ENCODE measurements at regions of chr2 and their contacts with region 1.

Region 1: GRCh38 chr2:69914170-69914960 is 544 bp upstream of the MXD1 start:
- DNase-seq: peak; percentile 98 to 100
- H3K4me3 ChIP-seq: peak overlapping the region; percentile 53 to 76 (median 70)
- H3K27ac ChIP-seq: peak overlapping the region; percentile 93
- H3K4me1 ChIP-seq: no peaks in the 10 kb centered on the region
- H3K27me3 ChIP-seq: no peaks in the 10 kb centered on the region
- CTCF ChIP-seq: peak in 2 of 3 experiments; percentile 24 to 31; a peak in 2 of 4 replicates
- EP300 ChIP-seq: no peak
- POLR2A ChIP-seq: peak; percentile 96 to 97
- RAD21 ChIP-seq: peak; percentile 22 to 49; a peak in 3 of 4 replicates

Region 2: GRCh38 chr2:69643602-69644505 is 270.5 kb before region 1 on chr2 and contains the start of gene AAK1:
- CTCF ChIA-PET with region 1: no interaction called
- POLR2A ChIA-PET with region 1: no interaction called
- DNase-seq: peak in 1 of 2 experiments; percentile 90
- H3K4me3 ChIP-seq: peak within 1 kb of the TSS; percentile 81 to 100 (median 97)
- H3K27ac ChIP-seq: peak within 1 kb of the TSS; percentile 73; the same call in 1 of the 2 replicates
- H3K4me1 ChIP-seq: peaks cover 4 to 17% (median 8%) of the 10 kb centered on the region in 4 experiments; a peak in 6 of 7 replicates
- H3K27me3 ChIP-seq: no peaks in the 10 kb centered on the region
- CTCF ChIP-seq: 0 out of 4 replicates have a peak, but pooled peaks of 1 of the 3 experiments have one; percentile 10
- EP300 ChIP-seq: peak in 1 of 2 experiments; percentile 38; a peak in 1 of 3 replicates
- POLR2A ChIP-seq: peak in 1 of 2 experiments; percentile 51; a peak in 2 of 3 replicates
- RAD21 ChIP-seq: no peak
- total RNA-seq, gene AAK1: 40.5 and 48.1 TPM in 2 replicates

Region 3: GRCh38 chr2:69807821-69808540 is 106.4 kb before region 1 on chr2:
- CTCF ChIA-PET with region 1: no interaction called
- POLR2A ChIA-PET with region 1: no interaction called
- DNase-seq: peak in 1 of 2 experiments; percentile 35
- H3K4me3 ChIP-seq: no peak overlapping the region
- H3K27ac ChIP-seq: no peak overlapping the region
- H3K4me1 ChIP-seq: no peaks in the 10 kb centered on the region
- H3K27me3 ChIP-seq: no peaks in the 10 kb centered on the region
- CTCF ChIP-seq: no peak
- EP300 ChIP-seq: no peak
- POLR2A ChIP-seq: no peak
- RAD21 ChIP-seq: no peak

Region 4: DNA sequence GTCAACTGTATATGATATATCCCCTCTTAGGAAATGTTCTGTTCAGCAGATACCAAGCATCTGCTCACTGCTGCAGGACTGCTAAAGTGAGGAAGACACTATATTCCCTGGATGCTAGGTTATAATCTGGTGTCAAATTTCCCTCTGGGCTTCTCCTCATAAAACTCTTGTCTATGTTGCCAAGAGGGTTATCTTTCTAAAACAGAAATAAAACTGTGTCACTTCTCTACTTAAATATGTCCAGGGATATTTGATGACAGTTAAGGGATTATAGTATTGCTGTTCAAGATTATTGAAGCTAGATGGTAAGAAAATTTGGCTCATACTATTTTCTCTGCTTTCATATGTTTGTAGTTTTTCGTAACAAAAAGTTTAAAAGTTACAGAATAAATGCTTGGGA is 51.1 kb before region 1 on chr2:
- CTCF ChIA-PET with region 1: no interaction called
- POLR2A ChIA-PET with region 1: no interaction called
- DNase-seq: no peak
- H3K4me3 ChIP-seq: no peak overlapping the region
- H3K27ac ChIP-seq: no peak overlapping the region
- H3K4me1 ChIP-seq: no peaks in the 10 kb centered on the region
- H3K27me3 ChIP-seq: no peaks in the 10 kb centered on the region
- CTCF ChIP-seq: no peak
- EP300 ChIP-seq: no peak
- POLR2A ChIP-seq: no peak
- RAD21 ChIP-seq: no peak

Region 5: GRCh38 chr2:69893684-69894551 is 20.4 kb before region 1 on chr2 and contains the start of gene SNRNP27:
- CTCF ChIA-PET with region 1: interaction called, 6 read pairs
- POLR2A ChIA-PET with region 1: interaction called, 21 read pairs
- DNase-seq: peak in 1 of 2 experiments; percentile 85
- H3K4me3 ChIP-seq: peak within 1 kb of the TSS; percentile 88 to 94 (median 91)
- H3K27ac ChIP-seq: peak within 1 kb of the TSS; percentile 72
- H3K4me1 ChIP-seq: no peaks in the 10 kb centered on the region
- H3K27me3 ChIP-seq: no peaks in the 10 kb centered on the region
- CTCF ChIP-seq: no peak
- EP300 ChIP-seq: no peak
- POLR2A ChIP-seq: peak in 1 of 2 experiments; percentile 73; a peak in 1 of 3 replicates
- RAD21 ChIP-seq: no peak; a peak in 1 of 4 replicates
- total RNA-seq, gene SNRNP27: 40.5 and 40.9 TPM in 2 replicates

Region 6: GRCh38 chr2:70005787-70006784 is 91.7 kb after region 1 on chr2:
- CTCF ChIA-PET with region 1: interaction called, 10 read pairs
- POLR2A ChIA-PET with region 1: interaction called, 6 read pairs
- DNase-seq: peak in 1 of 2 experiments; percentile 33
- H3K4me3 ChIP-seq: no peak overlapping the region
- H3K27ac ChIP-seq: no peak overlapping the region
- H3K4me1 ChIP-seq: peaks cover 4 to 14% (median 8%) of the 10 kb centered on the region in 4 experiments
- H3K27me3 ChIP-seq: no peaks in the 10 kb centered on the region
- CTCF ChIP-seq: peak; percentile 17 to 48 (median 29)
- EP300 ChIP-seq: no peak
- POLR2A ChIP-seq: no peak
- RAD21 ChIP-seq: peak; percentile 23 to 51; a peak in 2 of 4 replicates

Region 7: DNA sequence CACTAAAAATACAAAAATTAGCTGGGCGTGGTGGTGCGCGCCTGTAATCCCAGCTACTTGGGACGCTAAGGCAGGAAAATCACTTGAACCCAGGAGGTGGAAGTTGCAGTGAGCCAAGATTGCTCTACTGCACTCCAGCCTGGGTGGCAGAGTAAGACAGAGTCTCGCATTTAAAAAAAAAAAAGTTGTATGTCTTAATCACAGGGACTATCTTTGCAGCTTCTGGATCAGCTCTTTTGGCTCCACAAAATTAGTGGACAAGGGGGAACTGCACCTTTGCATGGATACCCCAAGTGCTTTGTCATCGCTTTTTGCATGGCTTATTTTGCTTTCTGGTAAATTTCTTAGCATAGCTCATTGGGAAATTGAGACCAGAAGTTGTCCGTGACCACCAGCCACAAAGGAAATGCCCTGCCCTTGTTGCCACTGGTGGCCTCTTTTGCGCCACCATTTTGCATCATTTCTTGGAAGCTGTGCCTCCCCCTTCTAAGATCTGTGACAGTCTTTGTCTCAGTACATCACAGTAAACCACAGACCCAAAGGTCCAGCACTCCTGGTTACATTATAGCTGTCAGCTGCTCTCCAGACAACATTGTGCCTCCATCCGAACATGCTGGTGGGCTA is 129.0 kb after region 1 on chr2:
- CTCF ChIA-PET with region 1: interaction called, 10 read pairs
- POLR2A ChIA-PET with region 1: interaction called, 7 read pairs
- DNase-seq: no peak
- H3K4me3 ChIP-seq: no peak overlapping the region
- H3K27ac ChIP-seq: no peak overlapping the region
- H3K4me1 ChIP-seq: no peaks in the 10 kb centered on the region
- H3K27me3 ChIP-seq: no peaks in the 10 kb centered on the region
- CTCF ChIP-seq: no peak
- EP300 ChIP-seq: no peak
- POLR2A ChIP-seq: no peak
- RAD21 ChIP-seq: no peak

Region 8: DNA sequence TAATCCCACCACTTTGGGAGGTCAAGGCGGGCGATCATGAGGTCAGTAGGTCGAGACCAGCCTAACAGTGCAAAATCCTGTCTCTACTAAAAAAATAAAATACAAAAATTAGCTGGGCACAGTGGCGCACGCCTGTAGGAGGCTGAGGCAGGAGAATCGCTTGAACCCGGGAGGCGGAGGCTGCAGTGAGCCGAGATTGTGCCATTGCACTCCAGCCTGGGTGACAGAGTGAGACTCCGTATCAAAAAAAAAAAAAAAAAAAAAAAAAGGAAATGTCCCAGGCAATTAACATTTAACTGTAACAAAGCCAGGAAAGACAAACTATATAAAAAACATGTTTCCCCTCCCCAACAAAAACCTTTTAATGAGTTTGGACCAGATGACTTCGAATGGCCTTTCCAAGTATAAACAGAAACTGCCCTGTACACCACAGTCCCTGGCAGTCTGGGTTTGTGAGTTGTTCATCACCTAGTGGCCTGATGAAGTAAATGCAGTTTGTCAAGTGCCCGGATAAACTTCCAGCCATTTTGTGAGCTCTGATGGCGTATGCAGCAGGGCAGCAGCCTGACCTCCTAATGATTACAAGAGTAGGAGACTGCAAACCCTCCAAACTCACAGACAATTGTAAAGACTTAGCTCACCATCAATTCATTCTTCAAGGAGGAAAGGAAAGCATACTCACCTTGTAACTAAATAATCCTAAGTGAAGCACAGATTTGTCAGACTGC is 156.3 kb after region 1 on chr2:
- CTCF ChIA-PET with region 1: interaction called, 42 read pairs
- POLR2A ChIA-PET with region 1: interaction called, 14 read pairs
- DNase-seq: no peak
- H3K4me3 ChIP-seq: no peak overlapping the region
- H3K27ac ChIP-seq: no peak overlapping the region
- H3K4me1 ChIP-seq: no peaks in the 10 kb centered on the region
- H3K27me3 ChIP-seq: no peaks in the 10 kb centered on the region
- CTCF ChIP-seq: peak; percentile 43 to 88 (median 77)
- EP300 ChIP-seq: no peak
- POLR2A ChIP-seq: 0 out of 3 replicates have a peak, but pooled peaks of 1 of the 2 experiments have one; percentile 27
- RAD21 ChIP-seq: peak; percentile 77 to 87

Region 9: DNA sequence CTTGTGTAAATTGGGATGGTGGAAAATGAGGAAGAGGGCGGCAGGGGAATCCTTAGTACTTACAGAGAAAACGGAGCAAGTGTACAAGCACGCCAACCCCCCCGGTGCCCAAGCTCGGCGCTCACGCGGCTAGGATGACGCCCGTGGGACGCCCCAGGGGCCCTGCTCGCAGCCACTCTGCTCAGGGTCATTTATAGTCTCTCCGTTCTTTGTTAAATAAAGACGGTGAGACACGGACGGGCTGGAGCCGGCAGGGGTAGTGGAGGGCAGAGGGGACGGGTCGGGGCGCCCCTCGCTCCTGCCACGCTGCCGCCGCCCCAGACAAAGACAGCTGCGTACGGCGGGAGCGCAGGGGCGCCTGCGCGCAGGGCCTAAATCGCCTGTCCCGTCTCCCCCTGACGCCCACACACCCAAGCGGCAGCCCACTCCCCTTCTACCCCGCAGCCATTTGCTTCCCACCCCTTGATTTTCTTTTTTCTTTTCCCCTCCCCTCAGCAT is 210.7 kb after region 1 on chr2:
- CTCF ChIA-PET with region 1: interaction called, 4 read pairs
- POLR2A ChIA-PET with region 1: interaction called, 28 read pairs
- DNase-seq: peak in 1 of 2 experiments; percentile 75
- H3K4me3 ChIP-seq: peak overlapping the region; percentile 52 to 89 (median 74)
- H3K27ac ChIP-seq: peak overlapping the region; percentile 97
- H3K4me1 ChIP-seq: peaks cover 7 to 18% (median 10%) of the 10 kb centered on the region in 4 experiments
- H3K27me3 ChIP-seq: no peaks in the 10 kb centered on the region; a peak in 1 of 7 replicates
- CTCF ChIP-seq: no peak
- EP300 ChIP-seq: no peak
- POLR2A ChIP-seq: peak; percentile 50 to 97
- RAD21 ChIP-seq: no peak

Region 10: GRCh38 chr2:70190418-70191243 is 276.3 kb after region 1 on chr2 and contains the start of gene C2orf42:
- CTCF ChIA-PET with region 1: interaction called, 5 read pairs
- POLR2A ChIA-PET with region 1: interaction called, 15 read pairs
- DNase-seq: peak; percentile 92
- H3K4me3 ChIP-seq: peak within 1 kb of the TSS; percentile 71 to 97 (median 74)
- H3K27ac ChIP-seq: peak within 1 kb of the TSS; percentile 77
- H3K4me1 ChIP-seq: no peaks in the 10 kb centered on the region
- H3K27me3 ChIP-seq: no peaks in the 10 kb centered on the region
- CTCF ChIP-seq: peak in 2 of 3 experiments; percentile 7 to 19; a peak in 2 of 4 replicates
- EP300 ChIP-seq: no peak
- POLR2A ChIP-seq: peak; percentile 90 to 96
- RAD21 ChIP-seq: peak; percentile 4 to 13; a peak in 2 of 4 replicates
- total RNA-seq, gene C2orf42: 9.4 and 10.7 TPM in 2 replicates

Measured in H1 (cell line).